A549 (cell line): ENCODE measurements at regions of chr14 and their contacts with region 1.

Region 1: DNA sequence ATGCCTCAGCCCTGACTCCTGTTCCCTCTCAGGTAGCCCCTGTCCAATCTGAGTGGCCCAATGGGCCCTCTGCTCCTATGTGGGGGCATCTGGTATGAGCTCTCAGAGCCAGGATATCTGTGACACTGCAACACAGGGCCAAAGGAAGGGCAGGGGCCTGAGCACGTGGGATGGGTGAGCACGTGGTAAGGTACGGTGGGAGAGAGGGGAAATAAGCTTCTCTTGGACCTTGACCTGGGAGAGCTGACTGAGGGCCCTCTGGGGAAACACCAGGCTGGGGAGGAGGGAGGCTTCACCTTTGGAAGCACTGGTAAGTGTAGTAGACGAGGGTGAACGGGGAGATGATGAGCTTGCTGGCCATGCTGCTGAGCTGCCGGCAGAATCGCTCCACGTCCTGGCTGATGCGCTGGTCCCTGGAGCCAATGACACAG is 6.7 kb downstream of the ABCD4 start:
- DNase-seq: no peak
- ATAC-seq: no peak
- H3K4me3 ChIP-seq: no peak overlapping the region
- H3K27ac ChIP-seq: no peak overlapping the region
- H3K4me1 ChIP-seq: no peaks in the 10 kb centered on the region; the same call in 2 of the 3 replicates
- CTCF ChIP-seq: no peak
- EP300 ChIP-seq: no peak
- POLR2A ChIP-seq: no peak
- RAD21 ChIP-seq: no peak

Region 2: DNA sequence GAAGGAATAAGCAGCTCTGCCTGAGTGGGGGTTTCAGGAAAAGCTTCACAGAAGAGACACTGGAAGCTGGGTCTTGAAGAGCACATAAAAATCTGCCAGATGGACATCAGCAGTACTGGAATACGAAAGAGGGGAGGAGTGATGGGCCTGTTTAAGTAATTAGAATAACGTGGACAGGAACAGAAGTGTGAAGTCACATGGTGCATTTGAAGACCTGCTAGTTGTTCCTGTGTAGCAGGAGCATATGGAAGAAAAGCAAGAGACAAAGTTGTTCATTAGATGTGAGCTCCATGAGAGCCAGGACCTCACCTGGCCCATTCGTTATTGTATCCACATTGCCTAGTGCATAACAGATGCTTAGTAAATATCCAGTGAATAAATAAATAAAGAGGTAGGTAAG is 126.1 kb before region 1 on chr14:
- CTCF ChIA-PET with region 1: no interaction called
- POLR2A ChIA-PET with region 1: no interaction called
- DNase-seq: no peak
- ATAC-seq: no peak
- H3K4me3 ChIP-seq: no peak overlapping the region
- H3K27ac ChIP-seq: no peak overlapping the region
- H3K4me1 ChIP-seq: no peaks in the 10 kb centered on the region
- CTCF ChIP-seq: no peak
- EP300 ChIP-seq: no peak
- POLR2A ChIP-seq: no peak
- RAD21 ChIP-seq: no peak

Region 3: GRCh38 chr14:74267588-74267987 is 28.5 kb before region 1 on chr14:
- CTCF ChIA-PET with region 1: interaction called, 13 read pairs
- POLR2A ChIA-PET with region 1: no interaction called
- DNase-seq: no peak
- ATAC-seq: no peak
- H3K4me3 ChIP-seq: no peak overlapping the region
- H3K27ac ChIP-seq: no peak overlapping the region
- H3K4me1 ChIP-seq: peaks cover 9% of the 10 kb centered on the region
- CTCF ChIP-seq: no peak
- EP300 ChIP-seq: no peak
- POLR2A ChIP-seq: no peak
- RAD21 ChIP-seq: no peak